Body of pancreas (tissue), 4 donors: ENCODE measurements at regions of chr12 and their contacts with region 1.

Region 1: DNA sequence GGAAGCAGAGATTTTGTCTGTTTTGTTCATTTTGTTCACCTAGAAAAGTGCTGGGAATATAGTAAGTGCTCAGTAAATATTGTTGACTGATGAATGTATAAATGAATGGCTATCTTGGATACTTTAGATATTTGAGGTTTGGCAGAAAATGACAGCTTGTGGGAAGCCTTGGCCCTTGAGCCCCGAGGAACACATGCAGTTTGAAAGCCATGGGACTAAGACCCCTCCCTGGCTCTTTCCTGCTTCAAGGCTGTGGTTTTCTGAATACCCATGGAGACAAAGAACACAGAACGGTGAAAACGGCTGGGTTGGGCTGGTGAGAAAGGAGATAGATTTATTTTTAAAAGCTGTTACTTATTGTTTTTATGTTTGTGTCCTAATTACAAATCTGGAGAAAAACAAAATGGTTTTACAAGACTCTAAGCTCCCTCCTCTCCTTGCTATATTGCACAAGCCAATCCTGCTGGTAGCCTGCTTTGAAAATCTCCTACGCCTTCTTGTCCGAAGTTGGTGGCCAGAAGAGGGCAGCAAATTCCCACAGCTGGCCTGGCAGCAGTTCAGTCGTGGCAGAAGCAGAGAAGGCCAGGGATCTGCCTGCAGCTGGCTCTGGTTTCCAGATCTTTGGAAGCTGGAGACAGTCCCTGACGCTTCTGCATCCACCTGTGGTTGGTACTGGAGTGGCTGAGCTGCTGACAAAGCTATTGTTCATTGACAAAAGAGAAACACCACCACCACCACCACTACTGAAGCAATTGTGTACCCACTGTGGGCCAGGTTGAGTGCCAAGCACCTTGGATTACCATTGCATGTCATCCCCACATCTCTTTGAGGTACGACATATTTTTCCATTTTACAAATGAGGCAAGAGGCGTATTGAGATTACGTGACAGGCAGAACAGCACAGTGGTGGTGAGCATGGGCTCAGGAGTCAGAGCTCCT is 5.2 kb upstream of the KRT85 start:
- DNase-seq: peak; percentile 88 to 91 (median 90)
- ATAC-seq: peak; percentile 92
- H3K4me3 ChIP-seq: no peak overlapping the region
- H3K27ac ChIP-seq: no peak overlapping the region
- H3K4me1 ChIP-seq: no peaks in the 10 kb centered on the region
- H3K27me3 ChIP-seq: no peaks in the 10 kb centered on the region
- CTCF ChIP-seq: peak; percentile 64 to 94 (median 86)
- POLR2A ChIP-seq: no peak

Region 2: DNA sequence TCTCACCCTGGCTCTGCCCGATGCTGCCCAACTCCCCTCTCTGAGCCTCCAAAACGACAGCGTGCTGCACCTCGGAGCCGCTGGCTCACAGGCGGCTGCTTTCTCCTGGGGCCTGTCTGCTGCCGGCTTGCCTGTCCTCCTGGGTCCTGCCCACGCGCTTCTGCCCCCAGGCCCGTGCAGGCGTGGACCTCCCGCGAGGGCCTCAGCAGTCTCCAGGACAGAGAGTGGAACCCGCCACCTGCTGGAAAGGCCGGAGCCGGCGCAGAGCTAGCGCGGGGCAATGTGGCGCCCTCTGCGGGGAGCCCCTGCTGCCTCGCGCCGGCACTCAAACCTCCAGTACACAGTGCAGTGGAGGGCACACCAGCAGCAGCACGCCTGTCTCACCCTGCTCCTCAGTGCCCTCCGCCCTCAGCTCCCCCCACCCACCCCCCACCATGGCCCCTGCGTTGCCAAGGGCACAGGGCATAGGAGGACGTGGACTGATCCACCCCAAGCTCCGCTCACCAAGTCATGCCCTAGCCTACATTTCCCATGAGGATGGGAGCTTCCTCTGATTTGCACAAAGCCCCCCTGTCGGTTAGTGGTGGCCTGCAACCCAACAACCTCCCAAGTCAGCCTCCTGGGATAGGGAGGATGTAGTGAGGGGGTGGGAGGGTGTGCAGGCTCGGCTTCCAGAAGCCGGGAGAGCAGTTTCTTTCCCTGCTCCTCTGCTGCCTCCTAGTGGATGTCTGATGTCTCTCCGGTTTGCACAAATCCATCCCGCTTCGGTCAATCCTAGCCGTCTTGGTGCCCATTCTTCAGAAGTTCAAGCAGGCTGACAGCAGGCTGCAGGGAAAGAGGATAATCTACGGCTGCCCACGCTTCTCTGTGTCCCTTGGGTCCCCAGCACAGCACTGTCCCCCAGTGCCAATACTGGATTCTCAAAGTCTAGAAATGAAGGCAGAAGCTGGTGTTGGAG is 507.2 kb after region 1 on chr12:
- intact Hi-C with region 1: loop called (anchors 5 kb)
- DNase-seq: peak; percentile 84 to 90 (median 87)
- ATAC-seq: peak; percentile 83
- H3K4me3 ChIP-seq: no peak overlapping the region
- H3K27ac ChIP-seq: peak overlapping the region in 3 of 4 donors; percentile 38 to 66 (median 52)
- H3K4me1 ChIP-seq: peaks cover 25% of the 10 kb centered on the region
- H3K27me3 ChIP-seq: no peaks in the 10 kb centered on the region
- CTCF ChIP-seq: peak; percentile 47 to 94 (median 80)
- POLR2A ChIP-seq: peak in 1 of 3 donors; percentile 31